ENCODE measurements at regions of chr14 and their contacts with region 1.

Region 1: DNA sequence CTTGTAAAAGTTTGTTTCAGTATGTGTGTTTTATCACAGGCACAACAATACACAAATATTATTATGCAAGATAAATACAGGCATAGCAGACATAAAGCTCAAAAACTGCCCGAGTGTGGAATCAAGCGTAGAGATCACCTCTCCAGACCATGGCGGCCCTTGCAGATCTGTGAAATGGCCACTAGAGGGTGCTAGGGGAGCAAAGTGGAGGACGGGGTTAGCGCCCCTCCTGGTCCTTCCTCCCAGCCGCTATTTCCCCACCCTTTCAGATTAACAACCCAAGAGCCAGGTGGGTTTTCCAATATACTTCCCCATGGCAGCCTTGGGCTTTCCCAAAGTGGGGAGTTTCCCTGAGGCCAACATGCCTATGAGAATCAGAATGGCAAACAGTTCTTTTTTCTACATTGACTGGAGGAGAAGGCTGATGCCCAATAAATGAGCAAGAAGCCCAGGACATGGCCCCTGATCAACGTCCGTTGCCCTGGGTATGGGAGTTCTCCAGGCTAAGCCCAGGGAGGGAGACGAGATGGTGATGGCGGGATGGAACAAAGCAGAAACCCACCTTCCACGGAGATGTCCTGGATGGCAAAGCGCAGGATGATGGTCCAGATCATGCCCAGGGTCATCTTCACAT is 67.4 kb downstream of the ACTN1 start:
- DNase-seq: peak; percentile 92
- H3K4me3 ChIP-seq: no peak overlapping the region; a peak in 1 of 4 replicates
- H3K27ac ChIP-seq: peak overlapping the region in 1 of 2 experiments; percentile 51; a peak in 2 of 4 replicates
- H3K4me1 ChIP-seq: peaks cover 0 to 3% of the 10 kb centered on the region in 2 experiments; a peak in 1 of 4 replicates
- H3K27me3 ChIP-seq: no peaks in the 10 kb centered on the region
- CTCF ChIP-seq: peak; percentile 99
- EP300 ChIP-seq: no peak
- RAD21 ChIP-seq: peak; percentile 95

Region 2: DNA sequence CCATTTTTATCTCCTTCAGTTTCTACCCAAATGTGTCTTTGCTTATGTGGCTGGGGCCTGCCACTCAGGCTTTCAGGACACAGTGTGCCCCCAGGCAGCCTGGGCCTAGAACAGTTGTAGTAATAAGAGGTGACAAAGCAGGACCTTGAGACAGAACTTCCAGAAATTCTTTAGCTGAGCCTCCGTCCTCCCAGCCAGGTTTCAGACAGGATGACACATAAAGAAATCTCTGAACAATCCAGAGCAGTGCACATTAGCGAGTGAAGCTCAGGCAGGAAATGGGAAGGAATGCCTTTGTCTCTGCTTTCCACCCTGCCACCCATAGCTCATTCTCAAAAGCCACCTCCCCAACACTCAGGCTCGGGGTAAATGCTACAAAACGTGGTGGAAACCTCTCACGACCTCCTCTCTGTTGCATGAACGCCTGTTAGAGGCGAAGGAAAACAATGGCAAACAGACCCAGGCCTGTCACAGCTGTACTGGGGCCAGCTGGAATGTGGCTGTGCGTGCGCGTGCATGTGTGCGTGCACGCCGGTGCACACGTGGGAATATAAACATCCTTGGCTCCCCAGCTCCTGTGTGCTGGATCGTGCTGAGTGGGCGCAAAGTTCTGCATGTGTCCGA is 405.6 kb before region 1 on chr14:
- CTCF ChIA-PET with region 1: no interaction called
- POLR2A ChIA-PET with region 1: no interaction called
- DNase-seq: no peak
- H3K4me3 ChIP-seq: no peak overlapping the region
- H3K27ac ChIP-seq: peak overlapping the region; percentile 41 to 75; a peak in 3 of 4 replicates
- H3K4me1 ChIP-seq: peaks cover 20 to 25% of the 10 kb centered on the region in 2 experiments; a peak in 3 of 4 replicates
- H3K27me3 ChIP-seq: no peaks in the 10 kb centered on the region
- CTCF ChIP-seq: no peak
- EP300 ChIP-seq: no peak
- RAD21 ChIP-seq: no peak

Region 3: GRCh38 chr14:68874746-68875155 is 37.0 kb before region 1 on chr14:
- CTCF ChIA-PET with region 1: interaction called, 15 read pairs
- POLR2A ChIA-PET with region 1: no interaction called
- DNase-seq: no peak
- H3K4me3 ChIP-seq: no peak overlapping the region
- H3K27ac ChIP-seq: no peak overlapping the region
- H3K4me1 ChIP-seq: no peaks in the 10 kb centered on the region
- H3K27me3 ChIP-seq: no peaks in the 10 kb centered on the region
- CTCF ChIP-seq: no peak
- EP300 ChIP-seq: no peak
- RAD21 ChIP-seq: no peak

Region 4: DNA sequence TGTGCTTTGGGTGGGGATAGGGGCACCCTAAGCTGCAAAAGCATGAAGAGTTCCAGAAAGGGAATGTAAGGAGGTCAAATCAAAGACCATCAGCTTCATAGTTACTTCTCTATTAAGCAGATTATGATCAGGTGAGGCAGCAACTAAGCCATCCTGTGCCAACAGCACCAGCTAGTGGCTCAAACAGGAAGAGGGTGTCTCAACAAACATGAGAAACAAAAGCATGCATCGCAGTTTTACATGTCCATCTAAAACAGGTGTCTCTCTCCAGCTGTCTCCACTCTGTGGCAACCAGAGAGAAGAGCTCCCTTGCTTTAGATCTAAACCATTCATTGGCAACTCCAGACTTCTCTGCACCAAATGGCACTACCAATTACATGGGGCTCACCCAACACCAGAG is 14.5 kb after region 1 on chr14:
- CTCF ChIA-PET with region 1: interaction called, 24 read pairs
- POLR2A ChIA-PET with region 1: interaction called, 4 read pairs
- DNase-seq: no peak
- H3K4me3 ChIP-seq: no peak overlapping the region
- H3K27ac ChIP-seq: no peak overlapping the region
- H3K4me1 ChIP-seq: peaks cover 0 to 29% of the 10 kb centered on the region in 2 experiments; a peak in 2 of 4 replicates
- H3K27me3 ChIP-seq: no peaks in the 10 kb centered on the region
- CTCF ChIP-seq: peak; percentile 51
- EP300 ChIP-seq: no peak
- RAD21 ChIP-seq: no peak

Region 5: DNA sequence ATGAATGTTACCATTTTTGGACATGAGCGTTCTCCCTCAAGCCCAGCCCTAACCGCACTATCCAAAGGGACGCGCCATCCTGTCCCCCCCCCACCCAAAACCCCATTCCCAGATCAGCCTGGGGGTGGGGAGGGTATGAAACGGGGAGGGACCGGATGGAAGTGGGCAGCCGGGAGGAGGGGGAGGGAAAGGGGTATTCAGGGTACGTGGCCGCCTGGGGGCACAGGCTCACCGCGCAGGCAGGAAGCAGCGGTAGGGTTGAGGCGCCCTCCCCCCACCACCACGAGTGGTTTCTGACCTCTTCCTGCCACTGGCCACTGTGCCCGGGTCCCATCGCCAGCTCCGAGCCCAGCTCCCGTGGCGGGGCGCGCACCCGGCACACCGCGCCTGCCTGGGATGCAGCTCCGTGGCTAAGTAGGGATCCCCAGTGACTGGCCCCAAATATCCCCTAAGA is 66.0 kb after region 1 on chr14:
- CTCF ChIA-PET with region 1: interaction called, 15 read pairs
- POLR2A ChIA-PET with region 1: no interaction called
- DNase-seq: peak; percentile 82
- H3K4me3 ChIP-seq: peak overlapping the region; percentile 87 to 96
- H3K27ac ChIP-seq: peak overlapping the region; percentile 98
- H3K4me1 ChIP-seq: peaks cover 30 to 51% of the 10 kb centered on the region in 2 experiments
- H3K27me3 ChIP-seq: no peaks in the 10 kb centered on the region
- CTCF ChIP-seq: peak; percentile 25
- EP300 ChIP-seq: peak; percentile 38 to 69; a peak in 3 of 4 replicates
- RAD21 ChIP-seq: peak; percentile 22; the same call in 1 of the 2 replicates

Region 6: GRCh38 chr14:69084023-69084422 is 172.3 kb after region 1 on chr14:
- CTCF ChIA-PET with region 1: interaction called, 68 read pairs
- POLR2A ChIA-PET with region 1: no interaction called
- DNase-seq: no peak
- H3K4me3 ChIP-seq: no peak overlapping the region
- H3K27ac ChIP-seq: no peak overlapping the region
- H3K4me1 ChIP-seq: peaks cover 13 to 15% of the 10 kb centered on the region in 2 experiments; a peak in 3 of 4 replicates
- H3K27me3 ChIP-seq: no peaks in the 10 kb centered on the region
- CTCF ChIP-seq: no peak
- EP300 ChIP-seq: no peak
- RAD21 ChIP-seq: no peak

Region 7: GRCh38 chr14:69101331-69101826 is 189.7 kb after region 1 on chr14:
- CTCF ChIA-PET with region 1: interaction called, 90 read pairs
- POLR2A ChIA-PET with region 1: no interaction called
- DNase-seq: peak; percentile 20
- H3K4me3 ChIP-seq: no peak overlapping the region; a peak in 1 of 4 replicates
- H3K27ac ChIP-seq: peak overlapping the region in 1 of 2 experiments; percentile 57; a peak in 2 of 4 replicates
- H3K4me1 ChIP-seq: peaks cover 0 to 4% of the 10 kb centered on the region in 2 experiments; a peak in 2 of 4 replicates
- H3K27me3 ChIP-seq: no peaks in the 10 kb centered on the region
- CTCF ChIP-seq: peak; percentile 75
- EP300 ChIP-seq: no peak
- RAD21 ChIP-seq: peak; percentile 53

Measured in SK-N-SH (cell line).